GM23248 (cell line): ENCODE measurements at regions of chr5 and their contacts with region 1.

Region 1: DNA sequence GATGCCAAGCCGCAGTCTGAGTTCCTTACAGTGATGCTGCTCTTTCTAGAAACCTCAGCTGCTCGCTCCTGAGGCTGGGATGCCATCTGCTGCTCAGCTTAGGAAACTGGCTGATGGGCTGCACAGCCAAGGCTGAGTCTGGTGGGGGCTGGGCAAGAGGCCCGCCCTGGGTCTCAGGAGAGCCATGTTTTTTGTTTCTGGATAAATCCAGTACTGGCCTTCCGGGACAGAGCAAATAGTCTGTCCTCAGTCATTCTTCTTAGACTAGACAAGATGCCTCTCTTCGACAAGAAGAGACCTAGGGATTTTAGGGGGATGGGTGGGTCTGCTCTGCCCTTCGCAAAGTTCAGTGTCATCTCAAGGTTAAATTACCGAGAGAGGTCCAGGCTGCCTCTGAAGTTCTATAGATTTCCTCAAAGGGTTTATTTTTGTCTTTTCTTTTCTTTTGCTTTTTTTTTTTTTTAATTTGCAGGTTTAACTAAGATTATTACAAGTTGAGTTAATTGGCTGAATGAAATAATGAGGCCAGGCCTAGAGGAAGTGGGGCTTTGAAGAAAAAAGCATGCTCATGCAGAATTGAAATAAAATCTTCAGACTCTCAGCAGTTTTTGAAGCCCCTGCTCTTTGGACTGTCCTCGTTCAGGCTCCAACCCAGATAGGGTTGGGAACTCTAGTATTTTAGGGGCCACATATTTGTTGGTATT is 30.6 kb upstream of the MATR3 start:
- DNase-seq: peak; percentile 97
- H3K4me3 ChIP-seq: no peak overlapping the region
- H3K27ac ChIP-seq: no peak overlapping the region
- H3K4me1 ChIP-seq: no peaks in the 10 kb centered on the region
- H3K27me3 ChIP-seq: no peaks in the 10 kb centered on the region

Region 2: DNA sequence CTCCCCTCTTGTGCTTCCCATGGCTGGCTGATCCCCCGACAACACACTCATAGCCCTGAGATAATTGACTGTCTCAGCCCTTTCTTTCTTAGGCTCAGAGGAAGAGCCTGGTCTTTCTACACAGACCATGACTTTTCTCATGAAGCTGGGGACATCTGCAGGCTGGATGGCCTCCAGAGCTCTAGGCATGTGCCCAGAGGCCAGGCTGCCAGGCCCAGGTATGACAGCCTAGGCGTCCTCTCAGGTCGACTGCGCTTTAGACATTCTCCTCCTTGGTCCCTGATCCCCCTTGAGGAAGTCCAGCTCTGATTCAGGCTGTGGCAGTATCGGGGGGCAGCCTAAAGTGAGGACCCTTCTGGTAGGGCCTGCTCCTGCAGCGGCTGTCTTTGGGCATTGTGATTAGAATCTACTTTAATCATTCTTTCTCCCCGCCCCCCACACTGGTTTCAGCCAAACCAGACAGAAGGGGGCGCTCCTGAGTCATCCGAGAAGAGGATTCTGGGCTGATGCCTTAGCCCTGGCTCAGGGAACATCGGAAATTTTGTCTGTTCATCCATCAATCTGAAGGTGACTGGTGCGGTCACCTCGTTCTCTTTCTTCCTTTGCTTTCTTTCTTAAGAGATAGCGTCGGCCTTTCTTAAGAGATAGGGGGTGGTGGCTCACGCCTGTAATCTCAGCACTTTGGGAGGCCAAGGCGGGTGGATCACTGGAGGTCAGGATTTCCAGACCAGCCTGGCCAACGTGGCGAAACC is 621.2 kb before region 1 on chr5:
- in situ Hi-C with region 1: loop called (anchors 10 kb)
- DNase-seq: peak; percentile 86
- H3K4me3 ChIP-seq: no peak overlapping the region
- H3K27ac ChIP-seq: no peak overlapping the region
- H3K4me1 ChIP-seq: no peaks in the 10 kb centered on the region
- H3K27me3 ChIP-seq: no peaks in the 10 kb centered on the region

Region 3: GRCh38 chr5:138824924-138825863 is 437.7 kb before region 1 on chr5:
- in situ Hi-C with region 1: loop called (anchors 10 kb)
- DNase-seq: peak; percentile 65
- H3K4me3 ChIP-seq: no peak overlapping the region
- H3K27ac ChIP-seq: no peak overlapping the region
- H3K4me1 ChIP-seq: peaks cover 18% of the 10 kb centered on the region
- H3K27me3 ChIP-seq: no peaks in the 10 kb centered on the region